Activated naive CD4-positive, alpha-beta T cell treated with anti-CD3 and anti-CD28 coated beads, Interleukin-2, amount 10 ng/mL, durations not matched to agents 7 days and 5 days (primary cell): ENCODE measurements at regions of chr7 and their contacts with region 1.

Region 1: DNA sequence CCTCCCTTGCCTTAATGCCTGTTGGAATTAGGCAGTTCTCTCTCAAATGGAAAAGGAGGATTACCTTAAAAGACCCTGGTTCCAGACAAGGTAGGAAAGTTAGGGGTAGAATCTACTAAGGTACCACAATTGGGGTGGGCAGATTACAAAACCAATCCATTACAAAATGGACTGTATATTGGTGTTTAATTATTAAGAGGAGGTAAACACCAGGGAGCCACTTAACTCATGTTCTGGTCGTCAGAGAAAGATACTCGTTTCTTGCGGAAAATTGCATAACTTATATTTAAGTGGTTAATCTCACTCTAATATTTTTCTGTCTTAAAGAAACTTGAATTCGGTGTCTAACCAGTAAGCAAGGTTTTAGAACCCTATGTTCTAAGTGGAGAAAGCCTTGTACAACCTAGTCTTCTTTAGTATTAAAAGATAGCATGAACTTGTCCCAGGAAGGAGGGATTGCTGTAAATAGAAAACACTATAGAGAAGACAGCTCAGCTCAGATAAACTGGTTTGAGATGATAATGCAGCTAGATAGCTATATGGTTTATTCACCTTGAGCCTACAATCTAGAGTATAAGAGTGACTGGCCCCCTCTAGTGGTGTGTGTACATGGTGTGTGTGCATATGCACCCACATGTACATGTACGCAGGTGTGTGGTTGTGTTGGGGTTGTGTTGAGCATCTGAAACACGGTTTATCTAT is 58.0 kb upstream of the STRIP2 start:
- DNase-seq: peak; percentile 67
- H3K4me3 Mint-ChIP-seq: no peak overlapping the region
- H3K27ac Mint-ChIP-seq: no peak overlapping the region
- H3K4me1 Mint-ChIP-seq: peaks cover 19% of the 10 kb centered on the region
- H3K27me3 Mint-ChIP-seq: no peaks in the 10 kb centered on the region

Region 2: DNA sequence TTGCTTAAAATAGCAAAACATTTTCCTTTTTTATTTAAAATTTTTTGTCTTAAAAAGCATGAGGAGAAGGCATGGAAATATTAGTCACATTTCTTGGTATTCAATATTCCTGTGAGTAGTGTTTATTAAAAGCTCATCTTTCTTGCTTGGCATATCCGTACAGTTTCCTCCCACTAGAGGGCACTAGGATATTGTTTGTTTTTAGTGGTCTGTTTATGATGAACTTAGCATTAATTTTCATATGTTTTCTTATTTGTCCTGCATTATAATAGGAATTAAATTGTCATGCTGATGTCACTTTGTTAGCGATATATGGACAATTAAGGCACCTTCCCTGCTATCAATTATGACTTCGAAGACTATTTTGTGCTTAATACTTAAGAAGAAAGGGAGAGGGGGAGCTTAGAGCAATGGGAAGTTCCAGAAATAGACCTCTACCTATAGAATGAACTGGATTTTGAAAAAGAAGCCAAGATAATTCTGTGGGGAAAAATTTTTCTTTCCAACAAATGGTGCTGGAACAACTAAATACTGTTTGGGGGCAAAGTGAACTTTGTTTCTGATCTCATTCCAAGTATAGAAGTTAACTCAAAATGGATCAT is 33.0 kb before region 1 on chr7:
- CTCF ChIA-PET with region 1: interaction called, 80 read pairs
- DNase-seq: peak; percentile 23
- H3K4me3 Mint-ChIP-seq: no peak overlapping the region
- H3K27ac Mint-ChIP-seq: peak overlapping the region; percentile 65
- H3K4me1 Mint-ChIP-seq: peaks cover 42% of the 10 kb centered on the region
- H3K27me3 Mint-ChIP-seq: no peaks in the 10 kb centered on the region

Region 3: DNA sequence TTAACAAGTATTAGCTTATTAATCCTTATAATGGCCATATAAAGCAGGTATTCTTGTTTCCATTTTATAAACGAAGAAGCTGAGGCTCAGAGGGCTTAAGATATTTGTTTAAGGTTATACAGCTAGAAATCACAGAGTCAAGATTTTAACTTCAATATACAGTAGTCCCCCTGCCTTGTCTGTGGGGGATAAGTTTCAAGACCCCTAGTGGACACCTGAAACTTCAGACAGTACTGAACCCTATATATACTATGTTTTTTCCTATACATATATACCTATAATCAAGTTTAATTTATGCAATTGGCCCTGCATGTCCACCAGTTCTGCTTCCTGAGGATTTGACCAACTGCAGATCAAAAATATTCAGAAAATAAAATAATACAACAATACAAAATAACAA is 13.6 kb after region 1 on chr7:
- CTCF ChIA-PET with region 1: interaction called, 16 read pairs
- DNase-seq: no peak
- H3K4me3 Mint-ChIP-seq: no peak overlapping the region
- H3K27ac Mint-ChIP-seq: no peak overlapping the region
- H3K4me1 Mint-ChIP-seq: peaks cover 13% of the 10 kb centered on the region
- H3K27me3 Mint-ChIP-seq: no peaks in the 10 kb centered on the region

Region 4: DNA sequence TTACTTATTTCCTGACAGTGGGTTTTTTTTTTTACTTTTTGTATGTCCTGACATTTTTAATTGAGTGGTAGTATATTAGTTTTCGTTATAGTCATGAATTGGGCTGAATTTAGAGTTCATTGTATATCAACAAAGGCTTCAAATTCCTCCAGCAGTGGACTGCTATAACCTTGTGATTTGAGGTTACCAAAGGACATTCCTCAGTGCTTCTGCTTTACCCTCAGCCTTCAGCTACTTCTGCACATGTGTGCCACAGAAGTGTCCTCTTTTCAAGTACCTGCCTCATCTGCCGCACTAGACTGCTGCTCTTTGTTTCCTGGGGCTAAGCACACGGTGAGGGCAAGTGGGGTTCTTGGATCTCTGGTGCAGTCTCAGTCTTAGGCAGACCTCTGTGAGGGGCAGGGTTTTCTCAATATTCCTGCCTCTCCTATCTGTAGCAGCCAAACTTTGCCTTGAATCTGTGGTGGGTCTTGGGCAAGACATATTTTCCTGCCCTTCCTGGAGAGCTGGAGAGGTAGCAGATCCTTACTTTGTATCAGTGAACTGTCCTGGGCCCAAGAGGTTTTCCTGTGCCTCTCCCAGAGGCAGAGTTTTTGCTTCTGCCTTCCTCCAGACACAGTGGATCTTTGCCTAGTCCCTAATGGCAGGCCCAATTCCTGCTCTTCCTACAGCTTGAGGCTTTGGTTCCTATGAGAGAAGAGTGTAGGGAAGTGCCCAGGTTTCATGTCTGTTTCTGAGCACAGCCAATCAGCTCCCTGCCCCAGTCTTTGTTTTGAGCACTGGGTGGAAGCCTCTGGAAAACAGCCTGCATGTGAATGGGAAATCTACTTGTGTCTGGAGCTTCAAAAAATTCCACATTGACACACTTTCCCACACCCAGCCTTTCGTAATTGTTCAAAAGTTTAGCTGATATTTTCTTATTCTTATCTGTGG is 19.0 kb after region 1 on chr7:
- CTCF ChIA-PET with region 1: interaction called, 12 read pairs
- DNase-seq: no peak
- H3K4me3 Mint-ChIP-seq: no peak overlapping the region
- H3K27ac Mint-ChIP-seq: no peak overlapping the region
- H3K4me1 Mint-ChIP-seq: no peaks in the 10 kb centered on the region
- H3K27me3 Mint-ChIP-seq: no peaks in the 10 kb centered on the region

Region 5: GRCh38 chr7:129433847-129434674 is 57.8 kb after region 1 on chr7 and contains the start of gene STRIP2:
- CTCF ChIA-PET with region 1: interaction called, 16 read pairs
- DNase-seq: peak; percentile 96
- H3K4me3 Mint-ChIP-seq: peak within 1 kb of the TSS; percentile 85
- H3K27ac Mint-ChIP-seq: peak within 1 kb of the TSS; percentile 81
- H3K4me1 Mint-ChIP-seq: peaks cover 37% of the 10 kb centered on the region
- H3K27me3 Mint-ChIP-seq: peaks cover 6% of the 10 kb centered on the region

Region 6: GRCh38 chr7:129468087-129468486 is 91.9 kb after region 1 on chr7:
- CTCF ChIA-PET with region 1: interaction called, 133 read pairs
- DNase-seq: no peak
- H3K4me3 Mint-ChIP-seq: no peak overlapping the region
- H3K27ac Mint-ChIP-seq: no peak overlapping the region
- H3K4me1 Mint-ChIP-seq: peaks cover 10% of the 10 kb centered on the region
- H3K27me3 Mint-ChIP-seq: no peaks in the 10 kb centered on the region

Region 7: DNA sequence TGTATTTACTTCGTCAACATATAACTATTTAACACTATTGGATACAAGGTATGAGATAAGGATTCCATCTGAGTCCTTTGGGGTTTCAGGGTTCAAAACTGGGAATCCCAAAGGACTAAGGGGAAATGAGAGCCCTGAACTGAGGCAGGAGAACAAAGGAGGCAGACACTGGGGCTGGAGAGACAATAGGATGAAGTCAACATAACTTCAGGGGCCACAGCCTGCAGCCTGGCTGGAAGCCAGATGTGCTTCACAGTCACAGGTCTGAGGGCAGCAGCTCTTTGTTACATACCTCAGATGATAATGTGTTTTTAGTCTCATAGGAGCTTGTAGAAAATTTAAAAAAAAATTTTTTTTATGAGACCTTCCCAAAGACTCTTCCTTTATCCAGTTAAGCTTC is 308.6 kb after region 1 on chr7:
- CTCF ChIA-PET with region 1: no interaction called
- DNase-seq: no peak
- H3K4me3 Mint-ChIP-seq: no peak overlapping the region
- H3K27ac Mint-ChIP-seq: no peak overlapping the region
- H3K4me1 Mint-ChIP-seq: no peaks in the 10 kb centered on the region
- H3K27me3 Mint-ChIP-seq: no peaks in the 10 kb centered on the region